ENCODE measurements at regions of chr2 and their contacts with region 1.

Region 1: GRCh38 chr2:128187032-128187654 is 96.1 kb downstream of the UGGT1 start:
- DNase-seq: no peak
- ATAC-seq: no peak

Region 2: DNA sequence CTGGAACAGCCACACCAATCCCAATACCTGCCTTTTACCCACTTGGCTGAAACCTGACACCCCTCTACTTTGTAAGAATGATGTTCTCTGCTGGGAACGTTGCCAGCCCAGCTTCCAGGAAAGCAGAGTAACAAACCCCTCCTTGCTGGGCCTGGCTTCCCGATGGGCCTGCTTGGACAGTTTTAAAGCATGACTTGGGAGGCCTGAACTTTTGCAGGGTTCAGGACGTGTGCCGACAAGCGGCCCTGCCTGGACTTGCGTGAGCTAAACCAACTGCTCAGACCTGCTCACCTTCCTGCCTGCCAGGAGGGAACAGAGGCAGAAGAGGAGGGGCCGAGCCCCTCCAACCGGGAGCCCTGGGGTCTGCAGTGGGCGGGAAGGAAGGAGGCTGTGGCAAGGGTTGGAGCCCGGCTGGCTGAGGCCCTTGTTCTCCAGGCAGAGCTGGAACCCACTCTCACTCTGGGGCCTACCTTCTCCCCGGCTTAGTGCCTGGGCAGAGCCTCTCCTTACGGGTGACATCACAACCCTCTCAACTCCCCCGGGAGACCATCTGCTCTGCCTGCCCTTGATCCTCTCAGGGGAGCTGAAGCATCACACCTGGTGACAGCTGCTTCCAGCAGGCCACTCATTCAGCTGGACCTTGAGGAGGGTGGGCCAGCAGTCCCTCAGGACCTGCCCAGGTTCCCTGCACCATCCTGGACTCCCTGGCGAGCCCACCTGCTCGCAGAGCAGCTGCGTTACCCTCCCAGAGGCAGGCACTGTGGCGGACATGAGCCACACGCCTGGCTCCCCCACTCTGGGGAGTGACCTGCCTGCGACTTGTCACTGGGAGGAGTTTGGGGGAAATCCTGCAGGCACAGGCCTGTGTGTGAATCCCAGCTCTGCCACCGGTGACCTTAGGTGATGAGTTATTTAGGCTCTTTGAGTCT is 118.3 kb after region 1 on chr2:
- intact Hi-C with region 1: loop called in 1 of 2 experiments (anchors 10 kb)
- DNase-seq: peak; percentile 54 to 82
- ATAC-seq: peak; percentile 14

Region 3: GRCh38 chr2:129160879-129161278 is 973.7 kb after region 1 on chr2:
- intact Hi-C with region 1: no loop called
- DNase-seq: no peak
- ATAC-seq: no peak